Uterus (tissue), 4 donors: ENCODE measurements at regions of chr16 and their contacts with region 1.

Region 1: GRCh38 chr16:1929578-1930337 is 11.5 kb upstream of the HS3ST6 start:
- DNase-seq: peak; percentile 80 to 91
- H3K4me3 ChIP-seq: peak overlapping the region; percentile 50 to 67
- H3K27ac ChIP-seq: peak overlapping the region; percentile 58 to 80
- H3K4me1 ChIP-seq: no peaks in the 10 kb centered on the region
- H3K27me3 ChIP-seq: no peaks in the 10 kb centered on the region
- CTCF ChIP-seq: peak; percentile 94 to 100 (median 100)
- POLR2A ChIP-seq: peak in 1 of 2 donors; percentile 62

Region 2: GRCh38 chr16:1863681-1864460 is 65.9 kb before region 1 on chr16:
- intact Hi-C with region 1: loop called (anchors 5 kb)
- DNase-seq: no peak
- H3K4me3 ChIP-seq: no peak overlapping the region
- H3K27ac ChIP-seq: no peak overlapping the region
- H3K4me1 ChIP-seq: no peaks in the 10 kb centered on the region
- H3K27me3 ChIP-seq: no peaks in the 10 kb centered on the region
- CTCF ChIP-seq: peak; percentile 31 to 52 (median 46)
- POLR2A ChIP-seq: no peak